Activated CD4-positive, alpha-beta memory T cell treated with anti-CD3 and anti-CD28 coated beads for 36 hours (primary cell): ENCODE measurements at regions of chr17 and their contacts with region 1.

Region 1: DNA sequence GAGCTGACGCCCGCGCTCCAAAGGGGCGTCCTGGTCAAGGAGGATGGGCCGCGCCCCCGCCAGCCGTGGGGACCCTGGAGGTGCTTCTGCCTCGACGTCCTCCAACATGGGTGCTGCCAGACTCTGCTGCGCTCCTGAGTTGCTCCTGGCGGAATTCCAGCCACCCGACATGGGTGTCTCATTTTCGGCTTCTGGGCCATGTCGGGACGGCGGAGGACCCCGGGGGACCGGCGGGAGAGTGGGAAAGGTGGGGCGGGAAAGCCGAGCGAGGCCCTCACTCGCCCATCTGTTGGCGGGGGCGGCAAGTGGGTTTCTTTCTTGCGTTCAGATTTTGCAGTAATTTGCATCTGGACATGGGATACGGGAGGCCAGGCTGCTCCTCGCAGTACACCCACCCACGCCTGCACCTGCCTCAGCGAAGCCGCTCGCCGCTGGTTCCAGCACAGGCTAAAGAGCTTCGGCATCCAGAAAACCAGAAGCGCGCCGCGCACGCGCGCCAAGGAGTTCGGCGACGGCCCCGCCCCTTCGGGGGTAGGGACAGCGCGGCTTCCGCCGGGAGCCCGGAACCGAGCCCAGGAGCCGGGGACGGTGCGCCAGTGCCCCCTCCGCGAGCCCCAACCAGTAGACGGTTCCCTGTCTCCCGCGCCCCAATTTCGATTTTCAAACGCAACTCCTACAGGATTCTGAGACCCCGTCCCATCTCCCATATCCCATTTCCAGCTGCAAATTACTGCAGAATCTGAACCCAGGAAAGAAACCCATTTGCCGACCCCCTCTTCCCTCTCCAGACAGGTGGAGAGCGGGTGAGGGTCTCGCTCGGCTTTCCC is at the start of gene ARMC7:
- DNase-seq: peak; percentile 96
- H3K4me3 Mint-ChIP-seq: peak within 1 kb of the TSS; percentile 90
- H3K27ac Mint-ChIP-seq: peak within 1 kb of the TSS; percentile 85
- H3K4me1 Mint-ChIP-seq: peaks cover 29% of the 10 kb centered on the region
- H3K27me3 Mint-ChIP-seq: no peaks in the 10 kb centered on the region
- total RNA-seq, gene ARMC7: 6.5 to 8.2 TPM

Region 2: GRCh38 chr17:74961657-74962490 is 147.7 kb before region 1 on chr17:
- CTCF ChIA-PET with region 1: interaction called, 37 read pairs
- POLR2A ChIA-PET with region 1: no interaction called
- intact Hi-C with region 1: loop called (anchors 1 kb)
- DNase-seq: peak; percentile 90
- H3K4me3 Mint-ChIP-seq: no peak overlapping the region
- H3K27ac Mint-ChIP-seq: no peak overlapping the region
- H3K4me1 Mint-ChIP-seq: peaks cover 9% of the 10 kb centered on the region
- H3K27me3 Mint-ChIP-seq: no peaks in the 10 kb centered on the region

Region 3: GRCh38 chr17:75004884-75005283 is 104.7 kb before region 1 on chr17:
- CTCF ChIA-PET with region 1: no interaction called
- POLR2A ChIA-PET with region 1: no interaction called
- intact Hi-C with region 1: no loop called
- DNase-seq: no peak
- H3K4me3 Mint-ChIP-seq: no peak overlapping the region
- H3K27ac Mint-ChIP-seq: no peak overlapping the region
- H3K4me1 Mint-ChIP-seq: no peaks in the 10 kb centered on the region
- H3K27me3 Mint-ChIP-seq: no peaks in the 10 kb centered on the region

Region 4: DNA sequence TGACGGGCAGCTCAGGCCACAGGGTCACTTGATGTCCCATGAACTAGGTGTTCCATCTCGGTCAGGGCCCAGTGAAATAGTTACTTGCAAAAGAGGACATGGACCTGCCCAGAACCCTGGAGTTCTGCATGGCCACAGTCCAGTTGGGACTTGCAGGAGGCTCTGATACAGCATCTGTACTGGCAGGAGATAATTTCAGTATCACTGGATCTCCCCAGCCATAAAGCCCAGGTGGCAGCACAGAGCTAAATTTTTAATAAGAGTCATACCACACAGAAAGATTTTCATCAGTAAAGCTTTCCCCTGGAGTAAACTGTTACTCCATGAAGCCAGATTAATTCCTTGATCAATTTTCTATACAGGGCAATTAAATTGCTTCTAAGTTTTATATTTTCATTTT is 39.8 kb before region 1 on chr17:
- CTCF ChIA-PET with region 1: interaction called, 11 read pairs
- POLR2A ChIA-PET with region 1: no interaction called
- intact Hi-C with region 1: no loop called
- DNase-seq: no peak
- H3K4me3 Mint-ChIP-seq: no peak overlapping the region
- H3K27ac Mint-ChIP-seq: no peak overlapping the region
- H3K4me1 Mint-ChIP-seq: peaks cover 32% of the 10 kb centered on the region
- H3K27me3 Mint-ChIP-seq: no peaks in the 10 kb centered on the region

Region 5: DNA sequence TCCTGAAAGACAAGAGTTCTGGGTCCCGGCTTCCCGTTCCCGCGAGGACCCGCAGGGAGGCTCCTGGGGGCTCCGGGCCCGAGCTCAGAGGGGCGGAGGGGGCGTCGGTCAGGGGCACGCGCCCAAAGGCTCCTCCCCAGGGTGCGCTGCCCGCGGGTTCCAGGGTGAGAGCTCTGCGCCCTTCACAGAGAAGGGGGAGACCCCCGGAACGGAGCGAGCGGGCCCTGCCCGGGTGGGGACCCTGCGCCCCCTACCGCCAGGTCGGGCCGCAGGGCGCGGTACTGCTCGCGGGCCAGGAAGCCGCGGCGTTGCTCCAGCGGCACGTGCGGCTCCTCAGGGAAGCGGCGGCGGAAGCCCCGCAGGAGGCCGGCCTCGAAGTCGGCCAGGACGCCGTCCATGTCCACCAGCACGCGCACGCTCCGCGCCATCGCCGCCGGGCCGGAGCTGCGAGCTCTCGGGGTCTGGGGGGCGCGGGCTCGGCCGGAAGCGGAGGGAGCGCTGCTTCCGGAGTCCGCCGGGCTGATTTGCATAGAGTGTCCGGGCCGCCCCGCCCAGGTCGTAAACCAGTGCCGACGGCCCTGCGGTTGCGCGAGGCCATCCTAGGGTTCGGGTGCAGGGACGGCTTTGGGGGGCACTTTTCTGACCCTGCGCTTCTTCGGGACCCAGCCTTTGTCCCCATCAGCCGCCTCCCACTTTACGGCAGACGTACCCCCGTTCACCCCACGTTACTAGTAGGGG is 21.8 kb after region 1 on chr17 and contains the start of gene NT5C:
- CTCF ChIA-PET with region 1: interaction called, 121 read pairs
- POLR2A ChIA-PET with region 1: interaction called, 12 read pairs
- intact Hi-C with region 1: loop called (anchors 1 kb)
- DNase-seq: peak; percentile 83
- H3K4me3 Mint-ChIP-seq: peak within 1 kb of the TSS; percentile 84
- H3K27ac Mint-ChIP-seq: peak within 1 kb of the TSS; percentile 86
- H3K4me1 Mint-ChIP-seq: peaks cover 18% of the 10 kb centered on the region
- H3K27me3 Mint-ChIP-seq: no peaks in the 10 kb centered on the region
- total RNA-seq, gene NT5C: 65.2 to 70.8 TPM

Region 6: GRCh38 chr17:75182569-75183450 is 73.2 kb after region 1 on chr17 and contains the start of gene SUMO2:
- CTCF ChIA-PET with region 1: interaction called, 10 read pairs
- POLR2A ChIA-PET with region 1: interaction called, 6 read pairs
- intact Hi-C with region 1: loop called (anchors 1 kb)
- DNase-seq: peak; percentile 97
- H3K4me3 Mint-ChIP-seq: peak within 1 kb of the TSS; percentile 91
- H3K27ac Mint-ChIP-seq: peak within 1 kb of the TSS; percentile 97
- H3K4me1 Mint-ChIP-seq: peaks cover 30% of the 10 kb centered on the region
- H3K27me3 Mint-ChIP-seq: no peaks in the 10 kb centered on the region
- total RNA-seq, gene SUMO2: 610 to 612 TPM

Region 7: DNA sequence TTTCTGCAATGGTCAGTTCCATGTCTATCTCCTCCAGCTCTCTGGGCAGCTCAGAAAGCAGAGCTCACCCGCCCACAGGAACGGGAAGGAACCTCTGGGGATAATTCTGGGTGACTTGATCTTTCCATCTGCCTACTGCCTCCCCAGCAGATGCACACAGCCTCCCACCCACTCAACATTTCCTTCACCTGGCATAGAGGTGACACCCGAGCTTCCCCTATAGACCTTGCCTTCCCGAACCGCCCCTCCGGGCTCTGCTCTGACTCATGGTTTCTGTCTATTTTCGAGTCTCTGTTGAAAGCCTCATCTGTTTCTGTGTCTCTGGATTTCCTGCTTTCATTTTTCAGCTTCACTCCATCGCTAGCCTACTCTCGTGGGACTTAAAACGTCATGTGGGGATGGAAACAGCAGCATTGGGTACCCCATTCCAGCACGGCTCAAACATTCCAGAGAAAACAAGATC is 140.4 kb after region 1 on chr17:
- CTCF ChIA-PET with region 1: interaction called, 12 read pairs
- POLR2A ChIA-PET with region 1: no interaction called
- intact Hi-C with region 1: no loop called
- DNase-seq: peak; percentile 91
- H3K4me3 Mint-ChIP-seq: peak overlapping the region; percentile 58
- H3K27ac Mint-ChIP-seq: peak overlapping the region; percentile 90
- H3K4me1 Mint-ChIP-seq: peaks cover 64% of the 10 kb centered on the region
- H3K27me3 Mint-ChIP-seq: no peaks in the 10 kb centered on the region

Region 8: GRCh38 chr17:75412455-75413317 is 303.1 kb after region 1 on chr17:
- CTCF ChIA-PET with region 1: interaction called, 11 read pairs
- POLR2A ChIA-PET with region 1: no interaction called
- intact Hi-C with region 1: no loop called
- DNase-seq: peak; percentile 86
- H3K4me3 Mint-ChIP-seq: peak overlapping the region; percentile 49
- H3K27ac Mint-ChIP-seq: peak overlapping the region; percentile 19
- H3K4me1 Mint-ChIP-seq: peaks cover 16% of the 10 kb centered on the region
- H3K27me3 Mint-ChIP-seq: peaks cover 1% of the 10 kb centered on the region